Esophagus muscularis mucosa (tissue), 4 donors: ENCODE measurements at regions of chr13 and their contacts with region 1.

Region 1: GRCh38 chr13:30132623-30133553 is 174.5 kb downstream of the KATNAL1 start:
- DNase-seq: peak; percentile 99
- H3K4me3 ChIP-seq: peak overlapping the region in 2 of 4 donors; percentile 14 to 27
- H3K27ac ChIP-seq: no peak overlapping the region
- H3K4me1 ChIP-seq: peaks cover 6 to 22% (median 17%) of the 10 kb centered on the region in 4 donors
- H3K27me3 ChIP-seq: no peaks in the 10 kb centered on the region
- CTCF ChIP-seq: peak; percentile 94 to 95 (median 95)
- EP300 ChIP-seq: no peak
- POLR2A ChIP-seq: no peak

Region 2: GRCh38 chr13:30157616-30157993 is 24.7 kb after region 1 on chr13:
- intact Hi-C with region 1: loop called (anchors 2 kb)
- DNase-seq: no peak
- H3K4me3 ChIP-seq: no peak overlapping the region
- H3K27ac ChIP-seq: no peak overlapping the region
- H3K4me1 ChIP-seq: no peaks in the 10 kb centered on the region
- H3K27me3 ChIP-seq: peaks cover 0 to 6% (median 0%) of the 10 kb centered on the region in 4 donors
- CTCF ChIP-seq: no peak
- EP300 ChIP-seq: no peak
- POLR2A ChIP-seq: no peak

Region 3: GRCh38 chr13:30306762-30307193 is 173.9 kb after region 1 on chr13:
- intact Hi-C with region 1: loop called (anchors 10 kb)
- DNase-seq: peak; percentile 98
- H3K4me3 ChIP-seq: peak overlapping the region; percentile 85 to 99 (median 93)
- H3K27ac ChIP-seq: peak overlapping the region; percentile 94 to 99 (median 96)
- H3K4me1 ChIP-seq: peaks cover 30 to 66% (median 59%) of the 10 kb centered on the region in 4 donors
- H3K27me3 ChIP-seq: no peaks in the 10 kb centered on the region
- CTCF ChIP-seq: no peak
- EP300 ChIP-seq: no peak
- POLR2A ChIP-seq: no peak

Region 4: GRCh38 chr13:30572859-30573275 is 440.0 kb after region 1 on chr13:
- intact Hi-C with region 1: loop called (anchors 5 kb)
- DNase-seq: no peak
- H3K4me3 ChIP-seq: peak overlapping the region; percentile 38 to 59 (median 48)
- H3K27ac ChIP-seq: peak overlapping the region; percentile 51 to 66 (median 63)
- H3K4me1 ChIP-seq: peaks cover 8 to 26% (median 20%) of the 10 kb centered on the region in 4 donors
- H3K27me3 ChIP-seq: no peaks in the 10 kb centered on the region
- CTCF ChIP-seq: peak in 2 of 3 experiments; percentile 22 to 36
- EP300 ChIP-seq: no peak
- POLR2A ChIP-seq: no peak